Endothelial cell of umbilical vein (primary cell): ENCODE measurements at regions of chr10 and their contacts with region 1.

Region 1: DNA sequence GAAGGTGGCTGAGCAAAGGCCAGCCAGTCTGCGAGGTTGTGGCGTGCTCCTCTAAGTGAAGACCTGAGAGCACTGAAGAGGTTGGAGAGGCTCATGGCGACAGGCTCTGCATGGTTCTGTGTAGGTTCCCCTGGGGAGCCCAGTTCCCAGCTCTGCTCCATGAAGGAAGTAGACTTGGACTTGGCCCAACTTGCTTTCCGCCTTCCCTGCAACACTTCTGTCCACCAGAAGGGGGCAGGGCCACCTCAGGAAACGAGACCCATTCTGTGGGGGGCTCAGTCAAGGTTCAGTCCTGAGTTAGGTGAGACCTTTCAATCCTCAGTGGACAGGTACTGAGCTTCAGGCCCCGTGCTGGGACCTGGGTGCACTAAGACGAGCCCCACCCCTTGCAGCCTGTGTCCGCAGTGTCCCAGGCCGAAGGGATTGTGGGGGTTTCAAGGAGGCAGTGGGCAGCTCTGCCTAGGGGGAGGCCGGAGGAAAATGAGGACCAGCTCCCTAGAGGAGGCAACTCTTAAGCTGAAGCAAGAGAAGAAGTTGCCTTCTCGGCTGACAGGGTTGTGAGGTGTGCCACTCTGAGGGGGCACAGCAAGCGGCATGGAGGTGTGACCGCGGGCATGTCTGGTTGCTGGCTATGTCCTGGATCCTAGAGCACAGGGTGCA is 15.0 kb upstream of the PCBD1 start:
- DNase-seq: peak; percentile 56
- H3K4me3 ChIP-seq: no peak overlapping the region
- H3K27ac ChIP-seq: no peak overlapping the region
- H3K4me1 ChIP-seq: no peaks in the 10 kb centered on the region
- H3K27me3 ChIP-seq: peaks cover 4 to 10% of the 10 kb centered on the region in 2 experiments
- CTCF ChIP-seq: peak; percentile 89 to 91
- POLR2A ChIP-seq: no peak

Region 2: GRCh38 chr10:70887804-70888800 is 15.3 kb before region 1 on chr10 and contains the start of gene PCBD1:
- CTCF ChIA-PET with region 1: interaction called, 20 read pairs
- POLR2A ChIA-PET with region 1: no interaction called
- dilution Hi-C with region 1: no loop called
- intact Hi-C with region 1: no loop called
- DNase-seq: peak; percentile 77
- H3K4me3 ChIP-seq: peak within 1 kb of the TSS; percentile 47 to 78 (median 47)
- H3K27ac ChIP-seq: peak within 1 kb of the TSS; percentile 15
- H3K4me1 ChIP-seq: peaks cover 23% of the 10 kb centered on the region
- H3K27me3 ChIP-seq: no peaks in the 10 kb centered on the region
- CTCF ChIP-seq: no peak
- POLR2A ChIP-seq: peak; percentile 39
- total RNA-seq, gene PCBD1: 77.5 and 95.7 TPM in 2 replicates

Region 3: GRCh38 chr10:71009126-71009525 is 105.7 kb after region 1 on chr10:
- CTCF ChIA-PET with region 1: no interaction called
- POLR2A ChIA-PET with region 1: no interaction called
- dilution Hi-C with region 1: no loop called
- intact Hi-C with region 1: no loop called
- DNase-seq: no peak
- H3K4me3 ChIP-seq: no peak overlapping the region
- H3K27ac ChIP-seq: no peak overlapping the region
- H3K4me1 ChIP-seq: no peaks in the 10 kb centered on the region
- H3K27me3 ChIP-seq: peaks cover 0 to 2% of the 10 kb centered on the region in 2 experiments
- CTCF ChIP-seq: no peak
- POLR2A ChIP-seq: no peak

Region 4: DNA sequence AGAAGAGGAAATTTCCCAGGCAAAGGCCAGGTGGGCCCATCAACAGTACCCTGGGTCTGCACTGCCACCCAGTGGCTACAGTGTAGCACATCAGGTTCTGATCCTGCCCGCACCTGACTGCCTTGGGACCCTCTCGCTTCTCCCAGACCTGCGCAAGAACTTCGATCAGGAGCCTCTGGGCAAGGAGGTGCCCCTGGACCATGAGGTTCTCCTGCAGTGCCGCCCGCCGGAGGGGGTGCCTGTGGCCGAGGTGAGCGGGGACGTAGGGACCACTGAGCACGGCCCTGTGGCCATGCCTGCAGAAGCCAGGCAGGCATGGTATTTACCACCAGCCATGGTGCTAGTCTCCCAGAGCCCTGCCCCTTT is 381.8 kb after region 1 on chr10:
- CTCF ChIA-PET with region 1: interaction called, 80 read pairs
- POLR2A ChIA-PET with region 1: no interaction called
- dilution Hi-C with region 1: no loop called
- intact Hi-C with region 1: loop called (anchors 1 kb)
- DNase-seq: peak; percentile 36
- H3K4me3 ChIP-seq: no peak overlapping the region
- H3K27ac ChIP-seq: no peak overlapping the region
- H3K4me1 ChIP-seq: no peaks in the 10 kb centered on the region
- H3K27me3 ChIP-seq: no peaks in the 10 kb centered on the region
- CTCF ChIP-seq: peak; percentile 64 to 82
- POLR2A ChIP-seq: no peak

Region 5: DNA sequence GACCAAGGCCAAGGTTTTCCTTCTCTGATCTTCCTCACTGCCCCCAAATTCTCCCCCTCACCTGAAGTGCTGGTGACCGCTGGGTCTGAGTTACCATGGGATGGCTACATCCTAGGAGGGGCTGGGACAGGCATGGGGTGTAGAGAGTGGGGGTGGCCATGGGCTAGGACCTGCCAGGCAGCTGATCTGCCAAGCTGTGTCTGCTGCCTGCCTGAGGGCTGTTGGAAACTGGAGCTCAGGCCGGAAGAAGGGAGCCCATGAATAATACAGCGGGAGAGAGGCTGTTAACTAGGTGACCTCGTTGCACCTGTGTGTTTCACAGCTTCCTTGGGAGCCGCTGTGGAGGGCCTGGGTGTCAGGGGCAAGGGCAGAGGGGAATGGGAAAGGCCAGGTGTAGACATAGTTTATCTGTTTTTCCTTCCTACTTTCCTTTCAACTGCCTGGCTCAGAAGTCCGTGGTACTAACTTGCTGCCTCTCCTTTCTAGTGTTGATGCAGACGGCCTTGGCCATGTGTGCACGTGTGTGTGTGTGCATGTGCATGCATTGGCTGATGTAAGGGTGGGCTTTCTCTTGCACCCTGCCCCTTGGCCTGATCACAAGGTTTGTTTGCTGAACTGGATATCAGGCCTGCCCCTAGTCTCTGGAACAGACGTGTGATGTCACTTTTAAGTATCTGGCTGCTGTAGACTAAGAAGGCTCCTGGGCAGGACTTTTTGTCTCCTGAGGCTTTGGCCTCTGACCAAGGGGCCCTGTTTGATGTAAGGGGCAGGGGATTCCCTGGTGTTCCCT is 505.2 kb after region 1 on chr10:
- CTCF ChIA-PET with region 1: no interaction called
- POLR2A ChIA-PET with region 1: no interaction called
- dilution Hi-C with region 1: no loop called
- intact Hi-C with region 1: no loop called
- DNase-seq: no peak
- H3K4me3 ChIP-seq: no peak overlapping the region
- H3K27ac ChIP-seq: no peak overlapping the region
- H3K4me1 ChIP-seq: no peaks in the 10 kb centered on the region
- H3K27me3 ChIP-seq: peaks cover 5 to 12% of the 10 kb centered on the region in 2 experiments
- CTCF ChIP-seq: no peak
- POLR2A ChIP-seq: no peak